HEK293T (cell line): ENCODE measurements at regions of chr21 and their contacts with region 1.

Region 1: DNA sequence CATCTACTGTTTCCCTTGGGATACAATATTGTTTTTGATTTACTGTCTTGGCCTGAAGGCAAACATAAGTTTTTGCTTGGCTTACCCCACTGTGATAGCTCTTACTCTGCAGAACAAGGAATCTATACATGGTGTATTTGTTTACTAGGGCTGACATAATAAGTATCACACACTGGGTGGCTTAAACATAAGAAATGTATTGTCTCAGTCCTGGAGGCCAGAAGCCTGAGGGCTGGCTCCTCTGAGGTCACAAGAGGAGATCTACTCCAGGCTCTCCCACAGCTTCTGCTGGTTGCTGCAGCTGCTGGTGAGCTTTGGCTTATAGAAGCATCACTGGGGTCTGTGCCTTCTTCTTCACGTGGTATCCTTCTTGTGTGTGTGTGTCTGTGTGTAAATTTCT is 30.7 kb upstream of the IGSF5 start:
- DNase-seq: no peak

Region 2: GRCh38 chr21:39288987-39289386 is 425.3 kb before region 1 on chr21:
- CTCF ChIA-PET with region 1: no interaction called
- POLR2A ChIA-PET with region 1: no interaction called
- DNase-seq: no peak

Region 3: DNA sequence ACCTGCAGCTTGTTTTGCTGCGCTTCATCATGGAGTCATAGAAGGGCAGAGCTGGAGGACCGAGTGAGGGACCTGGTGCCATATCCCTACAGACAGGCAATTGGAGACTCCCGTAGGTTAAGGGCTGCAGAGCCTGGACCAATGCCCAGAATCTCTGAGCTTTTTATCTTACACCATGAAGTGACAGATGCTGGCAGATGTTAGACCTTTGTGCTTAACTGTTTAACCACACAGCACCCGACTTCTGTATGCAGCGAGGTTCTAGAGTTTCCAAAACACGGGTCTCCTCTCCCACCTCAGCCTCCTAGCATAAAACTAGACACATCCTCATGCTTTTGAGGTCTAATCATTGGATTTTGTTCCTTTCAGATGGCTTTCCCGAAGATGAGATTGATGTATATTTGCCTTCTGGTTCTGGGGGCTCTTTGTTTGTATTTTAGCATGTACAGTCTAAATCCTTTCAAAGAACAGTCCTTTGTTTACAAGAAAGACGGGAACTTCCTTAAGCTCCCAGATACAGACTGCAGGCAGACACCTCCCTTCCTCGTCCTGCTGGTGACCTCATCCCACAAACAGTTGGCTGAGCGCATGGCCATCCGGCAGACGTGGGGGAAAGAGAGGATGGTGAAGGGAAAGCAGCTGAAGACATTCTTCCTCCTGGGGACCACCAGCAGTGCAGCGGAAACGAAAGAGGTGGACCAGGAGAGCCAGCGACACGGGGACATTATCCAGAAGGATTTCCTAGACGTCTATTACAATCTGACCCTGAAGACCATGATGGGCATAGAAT is 53.9 kb before region 1 on chr21:
- CTCF ChIA-PET with region 1: no interaction called
- POLR2A ChIA-PET with region 1: no interaction called
- DNase-seq: no peak

Region 4: GRCh38 chr21:39696618-39697017 is 17.7 kb before region 1 on chr21:
- CTCF ChIA-PET with region 1: interaction called, 10 read pairs
- POLR2A ChIA-PET with region 1: no interaction called
- DNase-seq: no peak